Pancreas (tissue), 10 donors: ENCODE measurements at regions of chr18 and their contacts with region 1.

Region 1: GRCh38 chr18:48777026-48777743 is 173.6 kb downstream of the SMAD7 start:
- DNase-seq: peak in 5 of 6 donors; percentile 21 to 86 (median 69)
- ATAC-seq: peak; percentile 60 to 75 (median 70)
- H3K4me3 ChIP-seq: no peak overlapping the region
- H3K27ac ChIP-seq: no peak overlapping the region
- H3K4me1 ChIP-seq: peaks cover 3 to 14% (median 6%) of the 10 kb centered on the region in 3 donors
- H3K27me3 ChIP-seq: no peaks in the 10 kb centered on the region
- CTCF ChIP-seq: peak; percentile 72 to 88 (median 80)

Region 2: GRCh38 chr18:48580782-48581181 is 196.4 kb before region 1 on chr18:
- intact Hi-C with region 1: no loop called
- DNase-seq: peak in 1 of 6 donors; percentile 52
- ATAC-seq: no peak
- H3K4me3 ChIP-seq: no peak overlapping the region
- H3K27ac ChIP-seq: no peak overlapping the region
- H3K4me1 ChIP-seq: no peaks in the 10 kb centered on the region
- H3K27me3 ChIP-seq: no peaks in the 10 kb centered on the region
- CTCF ChIP-seq: no peak

Region 3: DNA sequence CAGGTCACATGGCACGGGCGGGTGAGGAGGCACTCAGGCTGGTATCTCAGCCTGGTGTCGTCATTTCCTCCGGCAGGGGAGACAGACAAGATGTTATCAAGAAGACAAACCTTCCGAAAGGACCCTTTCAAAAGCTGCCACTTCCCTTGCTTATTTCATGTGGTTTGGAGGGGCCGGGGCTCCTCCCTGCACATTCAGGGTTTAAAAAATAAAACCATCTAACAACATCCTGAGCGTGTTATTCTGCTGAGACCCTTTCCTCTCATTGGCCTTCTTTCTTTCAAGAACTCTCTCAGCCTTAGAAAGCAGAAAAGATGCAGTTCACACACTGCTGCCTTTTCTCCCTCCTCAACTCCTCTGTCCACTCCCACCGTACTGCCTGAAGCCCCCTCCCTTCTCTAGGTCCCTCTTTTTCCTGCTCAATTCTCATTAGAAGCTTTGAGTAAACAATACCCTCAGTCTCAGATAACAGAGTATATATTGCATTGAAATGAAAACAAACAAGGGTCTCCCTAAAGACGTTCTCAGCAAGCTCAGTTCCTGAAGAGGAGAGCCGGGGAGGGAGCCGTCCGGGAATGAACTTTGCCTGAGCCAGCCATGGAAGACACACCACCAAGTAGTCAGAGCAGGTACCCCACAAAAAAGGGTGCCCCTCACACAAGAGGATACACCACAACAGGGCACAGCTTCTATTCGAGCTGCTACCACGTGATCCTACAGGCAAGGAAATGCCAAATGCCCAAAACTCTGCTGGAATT is 163.8 kb after region 1 on chr18:
- intact Hi-C with region 1: no loop called
- DNase-seq: peak in 1 of 6 donors; percentile 23
- ATAC-seq: no peak
- H3K4me3 ChIP-seq: peak overlapping the region in 1 of 4 donors; percentile 4
- H3K27ac ChIP-seq: peak overlapping the region in 3 of 4 donors; percentile 34 to 99 (median 60)
- H3K4me1 ChIP-seq: peaks cover 23 to 70% (median 51%) of the 10 kb centered on the region in 3 donors
- H3K27me3 ChIP-seq: no peaks in the 10 kb centered on the region
- CTCF ChIP-seq: no peak

Region 4: GRCh38 chr18:49041435-49042245 is 264.5 kb after region 1 on chr18:
- intact Hi-C with region 1: loop called in 1 of 3 experiments (anchors 10 kb)
- DNase-seq: peak in 1 of 6 donors; percentile 44
- ATAC-seq: peak in 3 of 4 donors; percentile 62 to 78 (median 76)
- H3K4me3 ChIP-seq: no peak overlapping the region
- H3K27ac ChIP-seq: no peak overlapping the region
- H3K4me1 ChIP-seq: no peaks in the 10 kb centered on the region
- H3K27me3 ChIP-seq: no peaks in the 10 kb centered on the region
- CTCF ChIP-seq: peak in 3 of 4 donors; percentile 23 to 31 (median 28)